ENCODE measurements at regions of chr1 and their contacts with region 1.

Region 1: DNA sequence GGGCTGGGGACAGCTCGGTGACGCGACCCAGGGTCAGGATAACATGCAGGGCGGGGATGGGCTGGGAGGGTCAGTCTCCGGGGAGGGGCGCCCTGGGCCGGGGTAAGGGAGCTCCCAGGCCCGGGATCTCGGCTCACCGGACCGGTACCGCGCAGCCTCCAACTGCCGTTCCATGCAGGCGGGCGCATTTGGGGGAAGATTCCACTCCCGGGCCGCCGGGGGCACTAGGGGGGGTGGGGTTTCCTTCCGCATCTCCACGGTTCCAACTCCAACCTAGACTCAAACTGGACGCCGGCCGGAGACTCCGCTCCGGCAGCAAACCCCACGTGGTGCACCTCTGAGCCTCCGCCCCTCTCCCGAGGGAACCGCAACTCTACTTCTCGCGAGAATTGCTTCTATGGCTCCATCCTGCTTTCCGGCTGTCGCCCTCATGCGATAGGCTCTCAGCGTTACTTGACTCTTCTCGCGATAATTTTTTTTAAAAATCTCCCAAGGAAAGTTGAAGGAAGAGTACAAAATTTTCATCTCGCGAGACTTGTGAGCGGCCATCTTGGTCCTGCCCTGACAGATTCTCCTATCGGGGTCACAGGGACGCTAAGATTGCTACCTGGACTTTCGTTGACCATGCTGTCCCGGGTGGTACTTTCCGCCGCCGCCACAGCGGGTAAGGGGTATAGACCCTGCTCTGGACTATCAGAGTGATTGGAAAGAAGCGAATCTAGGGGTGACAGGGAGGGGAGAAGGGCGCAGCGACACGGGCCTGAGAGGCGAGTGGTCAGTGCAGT is at the starts of genes ATP5PB and WDR77:
- DNase-seq: peak; percentile 73 to 99 (median 84)
- ATAC-seq: peak; percentile 95
- H3K4me3 ChIP-seq: peak within 1 kb of the TSS; percentile 75
- H3K4me3 Mint-ChIP-seq: peak within 1 kb of the TSS; percentile 97
- H3K27ac ChIP-seq: peak within 1 kb of the TSS; percentile 75 to 93
- H3K27ac Mint-ChIP-seq: peak within 1 kb of the TSS; percentile 97
- H3K4me1 ChIP-seq: peaks cover 44% of the 10 kb centered on the region
- H3K4me1 Mint-ChIP-seq: peaks cover 92% of the 10 kb centered on the region
- H3K27me3 ChIP-seq: no peaks in the 10 kb centered on the region
- H3K27me3 Mint-ChIP-seq: no peaks in the 10 kb centered on the region
- CTCF ChIP-seq: no peak
- total RNA-seq, gene ATP5PB: 47.3 to 51.5 TPM
- total RNA-seq, gene WDR77: 12.4 to 15.1 TPM

Region 2: DNA sequence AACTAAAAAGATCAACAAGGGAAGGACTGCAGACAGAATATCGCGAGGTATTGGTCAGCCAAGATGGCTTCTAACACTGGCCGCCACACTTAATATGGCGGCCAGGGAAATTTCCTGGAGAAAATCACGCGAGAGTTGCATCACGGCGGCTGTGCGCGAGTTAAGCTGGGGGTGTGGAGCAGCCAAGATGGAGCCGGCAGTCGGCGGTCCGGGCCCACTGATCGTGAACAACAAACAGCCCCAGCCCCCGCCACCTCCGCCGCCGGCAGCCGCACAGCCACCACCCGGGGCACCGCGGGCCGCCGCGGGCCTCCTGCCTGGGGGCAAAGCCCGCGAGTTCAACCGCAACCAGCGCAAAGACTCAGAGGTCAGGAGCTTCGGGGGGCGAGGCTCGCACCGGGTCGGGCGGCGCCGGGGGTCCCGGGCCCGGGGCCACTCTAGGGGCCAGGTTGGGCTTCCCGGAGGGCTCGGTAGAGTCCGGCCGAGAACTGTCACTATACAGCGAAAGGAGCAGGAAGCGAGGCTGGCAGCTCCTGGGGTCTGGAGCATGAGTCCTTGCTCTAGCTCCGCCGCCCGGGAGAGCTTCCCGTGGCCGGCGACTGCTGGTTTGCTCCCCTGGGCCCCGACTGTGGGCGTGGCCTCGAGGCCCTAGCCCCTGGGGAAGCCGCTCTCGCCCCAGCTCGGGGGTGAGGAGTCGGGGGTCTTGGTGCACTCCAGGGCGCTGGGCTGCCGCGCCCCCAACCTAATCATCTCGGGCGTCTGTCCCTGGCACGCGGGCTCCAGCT is 1414.5 kb before region 1 on chr1 and contains the start of gene STRIP1:
- CTCF ChIA-PET with region 1: no interaction called
- POLR2A ChIA-PET with region 1: interaction called, 5 read pairs
- intact Hi-C with region 1: loop called in 1 of 2 experiments (anchors 10 kb)
- DNase-seq: peak; percentile 85 to 98 (median 89)
- ATAC-seq: peak; percentile 95
- H3K4me3 ChIP-seq: peak within 1 kb of the TSS; percentile 84
- H3K4me3 Mint-ChIP-seq: peak within 1 kb of the TSS; percentile 98
- H3K27ac ChIP-seq: peak within 1 kb of the TSS; percentile 37 to 64
- H3K27ac Mint-ChIP-seq: peak within 1 kb of the TSS; percentile 81
- H3K4me1 ChIP-seq: peaks cover 41% of the 10 kb centered on the region
- H3K4me1 Mint-ChIP-seq: peaks cover 56% of the 10 kb centered on the region
- H3K27me3 ChIP-seq: no peaks in the 10 kb centered on the region
- H3K27me3 Mint-ChIP-seq: no peaks in the 10 kb centered on the region
- CTCF ChIP-seq: no peak
- total RNA-seq, gene STRIP1: 74.3 to 80.9 TPM

Region 3: DNA sequence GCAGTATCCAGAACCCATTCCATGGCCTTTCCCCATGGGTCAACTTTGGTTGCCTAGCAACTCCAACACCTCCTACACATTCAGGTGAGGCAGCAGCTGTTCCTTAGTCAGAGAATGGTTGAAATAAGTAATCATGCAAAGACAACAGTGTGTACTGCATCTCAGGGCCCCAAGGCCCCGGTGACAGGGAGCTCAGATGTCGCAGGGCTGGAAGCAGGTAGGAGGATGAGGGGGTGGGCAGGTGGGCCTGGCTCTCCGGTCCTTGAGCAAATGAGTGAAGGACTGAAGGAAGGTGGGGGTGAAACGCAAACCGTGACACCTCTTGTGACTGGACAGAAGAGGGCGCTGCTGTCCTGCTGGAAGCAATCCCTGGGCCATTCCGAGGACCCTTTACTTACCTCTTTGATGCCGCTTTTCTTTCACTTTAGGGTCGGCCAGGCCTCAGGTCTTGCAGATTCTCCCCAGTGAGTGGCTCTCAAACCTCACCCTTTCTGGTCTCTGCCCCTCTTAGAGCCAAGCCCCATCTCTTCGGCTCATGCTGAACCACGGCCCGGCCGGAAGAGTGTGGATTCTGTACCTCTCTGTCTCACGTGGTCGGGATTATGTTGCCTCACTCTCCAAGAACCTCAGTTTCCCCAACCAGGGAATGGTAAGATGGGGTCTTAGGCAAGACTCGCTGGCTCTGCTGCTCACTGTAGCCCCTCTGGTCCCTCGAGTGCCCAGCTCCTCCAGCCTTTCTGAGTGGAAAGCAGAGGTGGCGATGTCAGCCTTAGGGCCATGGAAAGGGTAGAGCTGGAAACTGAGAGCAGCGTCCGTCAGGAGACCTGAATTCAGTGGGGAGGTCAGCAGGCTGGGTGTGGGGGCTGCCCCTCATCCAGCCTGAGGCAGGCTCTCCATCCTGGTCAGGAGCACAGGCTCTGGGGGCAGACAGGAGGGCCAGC is 924.5 kb before region 1 on chr1:
- CTCF ChIA-PET with region 1: no interaction called
- POLR2A ChIA-PET with region 1: no interaction called
- intact Hi-C with region 1: no loop called
- DNase-seq: peak; percentile 11 to 76 (median 30)
- ATAC-seq: peak; percentile 66
- H3K4me3 ChIP-seq: no peak overlapping the region
- H3K4me3 Mint-ChIP-seq: no peak overlapping the region
- H3K27ac ChIP-seq: no peak overlapping the region
- H3K27ac Mint-ChIP-seq: no peak overlapping the region
- H3K4me1 ChIP-seq: peaks cover 8% of the 10 kb centered on the region
- H3K4me1 Mint-ChIP-seq: no peaks in the 10 kb centered on the region
- H3K27me3 ChIP-seq: peaks cover 0 to 10% of the 10 kb centered on the region in 2 experiments
- H3K27me3 Mint-ChIP-seq: peaks cover 38% of the 10 kb centered on the region
- CTCF ChIP-seq: peak; percentile 58

Region 4: GRCh38 chr1:111062081-111062480 is 387.0 kb before region 1 on chr1:
- CTCF ChIA-PET with region 1: no interaction called
- POLR2A ChIA-PET with region 1: no interaction called
- intact Hi-C with region 1: no loop called
- DNase-seq: no peak
- ATAC-seq: no peak
- H3K4me3 ChIP-seq: no peak overlapping the region
- H3K4me3 Mint-ChIP-seq: no peak overlapping the region
- H3K27ac ChIP-seq: no peak overlapping the region
- H3K27ac Mint-ChIP-seq: no peak overlapping the region
- H3K4me1 ChIP-seq: no peaks in the 10 kb centered on the region
- H3K4me1 Mint-ChIP-seq: no peaks in the 10 kb centered on the region
- H3K27me3 ChIP-seq: peaks cover 3 to 6% of the 10 kb centered on the region in 2 experiments
- H3K27me3 Mint-ChIP-seq: peaks cover 33% of the 10 kb centered on the region
- CTCF ChIP-seq: no peak

Region 5: GRCh38 chr1:111406321-111406768 is 42.8 kb before region 1 on chr1:
- CTCF ChIA-PET with region 1: no interaction called
- POLR2A ChIA-PET with region 1: interaction called, 3 read pairs
- intact Hi-C with region 1: loop called in 1 of 2 experiments (anchors 5 kb)
- DNase-seq: peak; percentile 22 to 79 (median 51)
- ATAC-seq: peak; percentile 99
- H3K4me3 ChIP-seq: no peak overlapping the region
- H3K4me3 Mint-ChIP-seq: peak overlapping the region; percentile 7
- H3K27ac ChIP-seq: peak overlapping the region in 1 of 2 donors; percentile 31
- H3K27ac Mint-ChIP-seq: peak overlapping the region; percentile 65
- H3K4me1 ChIP-seq: peaks cover 12% of the 10 kb centered on the region
- H3K4me1 Mint-ChIP-seq: peaks cover 50% of the 10 kb centered on the region
- H3K27me3 ChIP-seq: no peaks in the 10 kb centered on the region
- H3K27me3 Mint-ChIP-seq: no peaks in the 10 kb centered on the region
- CTCF ChIP-seq: no peak

Region 6: DNA sequence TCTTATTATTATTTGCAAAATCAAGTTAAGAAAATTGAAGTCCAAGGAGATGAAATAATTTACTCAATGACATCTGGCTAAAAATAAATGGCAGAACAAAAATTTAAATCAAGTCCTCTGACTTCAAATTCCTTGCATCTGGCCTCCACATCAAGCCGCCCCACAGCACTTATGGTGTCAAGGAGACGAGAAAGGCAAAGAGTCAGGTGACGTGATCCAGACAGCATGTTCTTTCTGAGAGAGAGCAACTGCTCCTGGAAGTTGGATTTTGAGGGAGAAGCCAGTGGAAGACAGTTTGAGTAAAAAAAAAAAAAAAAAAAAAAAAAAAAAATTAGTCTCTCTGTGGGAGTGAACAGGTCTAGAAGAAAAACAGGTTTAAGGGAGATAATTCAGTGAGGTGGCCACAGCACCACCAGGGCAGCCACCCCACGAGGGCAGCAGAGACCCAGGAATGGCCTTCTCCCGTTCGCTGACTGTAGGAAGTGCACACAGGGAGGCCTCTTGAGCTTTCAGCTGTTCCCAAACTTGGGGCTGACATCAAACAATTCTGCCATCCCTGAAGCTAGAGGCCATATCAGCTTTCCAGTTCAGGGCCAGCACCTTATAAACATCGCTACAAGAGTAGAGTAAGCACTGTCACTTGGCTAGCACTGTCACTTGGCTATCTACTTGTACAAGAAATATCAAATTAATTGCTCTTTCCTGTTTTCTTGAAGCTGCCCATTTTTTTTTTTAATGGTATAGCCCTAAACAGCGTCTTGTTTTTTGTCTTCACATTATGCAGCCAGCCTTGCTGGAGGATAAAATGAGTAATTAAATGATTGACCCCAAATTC is 32.5 kb after region 1 on chr1:
- CTCF ChIA-PET with region 1: interaction called, 5 read pairs
- POLR2A ChIA-PET with region 1: interaction called, 28 read pairs
- intact Hi-C with region 1: no loop called
- DNase-seq: peak; percentile 17 to 79 (median 56)
- ATAC-seq: peak; percentile 40
- H3K4me3 ChIP-seq: no peak overlapping the region
- H3K4me3 Mint-ChIP-seq: peak overlapping the region; percentile 55
- H3K27ac ChIP-seq: no peak overlapping the region
- H3K27ac Mint-ChIP-seq: no peak overlapping the region
- H3K4me1 ChIP-seq: peaks cover 30% of the 10 kb centered on the region
- H3K4me1 Mint-ChIP-seq: peaks cover 62% of the 10 kb centered on the region
- H3K27me3 ChIP-seq: no peaks in the 10 kb centered on the region
- H3K27me3 Mint-ChIP-seq: no peaks in the 10 kb centered on the region
- CTCF ChIP-seq: peak; percentile 51

Region 7: GRCh38 chr1:111755331-111756123 is 306.4 kb after region 1 on chr1 and contains the start of gene DDX20:
- CTCF ChIA-PET with region 1: no interaction called
- POLR2A ChIA-PET with region 1: interaction called, 8 read pairs
- intact Hi-C with region 1: loop called (anchors 2 to 5 kb)
- DNase-seq: peak; percentile 87 to 97 (median 92)
- ATAC-seq: peak; percentile 85
- H3K4me3 ChIP-seq: peak within 1 kb of the TSS; percentile 89
- H3K4me3 Mint-ChIP-seq: peak within 1 kb of the TSS; percentile 89
- H3K27ac ChIP-seq: peak within 1 kb of the TSS; percentile 89 to 95
- H3K27ac Mint-ChIP-seq: peak within 1 kb of the TSS; percentile 96
- H3K4me1 ChIP-seq: peaks cover 24% of the 10 kb centered on the region
- H3K4me1 Mint-ChIP-seq: peaks cover 45% of the 10 kb centered on the region
- H3K27me3 ChIP-seq: no peaks in the 10 kb centered on the region
- H3K27me3 Mint-ChIP-seq: no peaks in the 10 kb centered on the region
- CTCF ChIP-seq: peak; percentile 89
- total RNA-seq, gene DDX20: 27.2 to 27.4 TPM

Measured in CD4-positive, alpha-beta T cell (primary cell).